ENCODE measurements at regions of chr5 and their contacts with region 1.

Region 1: GRCh38 chr5:131610198-131611063 is 24.6 kb downstream of the RAPGEF6 start:
- DNase-seq: no peak
- ATAC-seq: no peak
- H3K4me3 ChIP-seq: no peak overlapping the region
- H3K4me3 Mint-ChIP-seq: peak overlapping the region in 1 of 10 donors; percentile 27
- H3K27ac ChIP-seq: no peak overlapping the region
- H3K27ac Mint-ChIP-seq: peak overlapping the region in 2 of 9 donors; percentile 31 to 39
- H3K4me1 ChIP-seq: peaks cover 0 to 4% of the 10 kb centered on the region in 2 donors
- H3K4me1 Mint-ChIP-seq: peaks cover 27 to 85% (median 73%) of the 10 kb centered on the region in 7 donors
- H3K27me3 ChIP-seq: no peaks in the 10 kb centered on the region
- H3K27me3 Mint-ChIP-seq: no peaks in the 10 kb centered on the region

Region 2: GRCh38 chr5:131595088-131596033 is 15.1 kb before region 1 on chr5:
- CTCF ChIA-PET with region 1: no interaction called
- POLR2A ChIA-PET with region 1: no interaction called
- intact Hi-C with region 1: loop called in 1 of 2 experiments (anchors 1 kb)
- DNase-seq: peak in 7 of 9 donors; percentile 26 to 56 (median 52)
- ATAC-seq: peak; percentile 90
- H3K4me3 ChIP-seq: no peak overlapping the region
- H3K4me3 Mint-ChIP-seq: peak overlapping the region; percentile 3 to 76 (median 64)
- H3K27ac ChIP-seq: peak overlapping the region; percentile 29
- H3K27ac Mint-ChIP-seq: peak overlapping the region; percentile 55 to 84 (median 77)
- H3K4me1 ChIP-seq: peaks cover 20 to 24% of the 10 kb centered on the region in 2 donors
- H3K4me1 Mint-ChIP-seq: peaks cover 29 to 86% (median 78%) of the 10 kb centered on the region in 7 donors
- H3K27me3 ChIP-seq: no peaks in the 10 kb centered on the region
- H3K27me3 Mint-ChIP-seq: no peaks in the 10 kb centered on the region

Region 3: DNA sequence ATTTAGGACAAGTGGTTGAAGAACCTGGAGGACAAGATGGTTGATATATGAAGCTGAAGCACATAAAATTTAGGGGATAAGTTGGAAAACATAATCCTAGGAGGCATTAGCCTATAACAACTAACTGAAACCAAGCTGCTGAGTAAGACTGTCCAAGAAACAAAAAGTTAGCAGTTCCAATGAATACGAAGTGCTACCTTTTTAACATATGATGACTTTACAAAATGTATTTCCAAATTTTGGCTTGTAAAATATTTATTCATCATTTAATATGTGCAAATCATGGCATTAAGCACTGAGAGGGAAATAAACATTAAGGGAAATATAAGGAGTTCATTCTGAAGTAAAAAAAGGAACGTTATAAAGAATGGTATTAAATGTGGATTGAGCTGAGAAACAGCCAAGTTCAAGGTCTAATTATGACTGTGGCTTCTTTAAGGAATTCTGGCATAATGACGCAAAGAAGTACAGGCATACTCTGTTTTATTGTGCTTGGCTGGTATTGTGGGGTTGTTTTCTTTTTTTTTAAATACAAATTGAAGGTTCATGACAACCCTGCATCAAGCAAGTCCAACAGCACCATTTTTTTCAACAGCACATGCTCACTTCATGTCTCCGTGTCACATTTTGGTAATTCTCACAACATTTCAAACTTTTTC is 16.9 kb after region 1 on chr5:
- CTCF ChIA-PET with region 1: no interaction called
- POLR2A ChIA-PET with region 1: interaction called, 9 read pairs
- intact Hi-C with region 1: loop called in 1 of 2 experiments (anchors 2 kb)
- DNase-seq: no peak
- ATAC-seq: no peak
- H3K4me3 ChIP-seq: no peak overlapping the region
- H3K4me3 Mint-ChIP-seq: peak overlapping the region in 4 of 10 donors; percentile 27 to 54 (median 37)
- H3K27ac ChIP-seq: no peak overlapping the region
- H3K27ac Mint-ChIP-seq: peak overlapping the region in 2 of 9 donors; percentile 4 to 5
- H3K4me1 ChIP-seq: peaks cover 21 to 32% of the 10 kb centered on the region in 2 donors
- H3K4me1 Mint-ChIP-seq: peaks cover 20 to 57% (median 22%) of the 10 kb centered on the region in 7 donors
- H3K27me3 ChIP-seq: no peaks in the 10 kb centered on the region
- H3K27me3 Mint-ChIP-seq: no peaks in the 10 kb centered on the region

Measured in naive thymus-derived CD4-positive, alpha-beta T cell (primary cell).